Testis (tissue), 5 donors: ENCODE measurements at regions of chr18 and their contacts with region 1.

Region 1: DNA sequence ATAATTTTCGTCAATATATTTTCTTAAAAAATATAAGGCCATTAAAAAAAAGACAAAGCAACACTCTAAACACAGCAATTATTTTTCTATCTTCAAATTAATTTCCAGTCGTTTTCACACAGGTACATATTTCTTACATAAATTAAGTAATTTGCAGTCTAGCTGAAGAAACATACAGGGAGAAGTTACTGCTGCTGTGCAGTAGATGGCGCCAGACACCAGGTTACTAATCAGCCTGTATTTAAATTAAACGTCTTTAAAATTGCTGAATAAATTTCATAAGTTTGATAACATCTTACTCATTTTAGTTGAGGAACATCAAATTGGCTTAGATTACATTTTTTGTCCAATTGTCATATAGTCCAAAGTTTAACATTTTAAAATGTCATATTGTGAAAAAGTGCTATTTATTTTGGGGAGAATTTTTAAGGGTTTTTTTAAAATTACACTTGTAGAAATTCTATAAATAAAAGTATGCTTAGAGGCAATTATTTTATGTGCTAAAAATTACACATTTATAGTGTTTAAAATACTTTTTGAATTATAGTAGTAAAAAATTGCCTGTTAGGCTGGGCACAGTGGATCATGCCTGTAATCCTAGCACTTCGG is 88.4 kb downstream of the PMAIP1 start:
- DNase-seq: peak; percentile 41
- H3K4me3 ChIP-seq: no peak overlapping the region
- H3K27ac ChIP-seq: no peak overlapping the region
- H3K4me1 ChIP-seq: no peaks in the 10 kb centered on the region
- H3K27me3 ChIP-seq: no peaks in the 10 kb centered on the region
- CTCF ChIP-seq: peak; percentile 73 to 90 (median 86)
- POLR2A ChIP-seq: no peak

Region 2: GRCh38 chr18:60554967-60555366 is 566.8 kb after region 1 on chr18:
- intact Hi-C with region 1: loop called (anchors 10 kb)
- DNase-seq: no peak
- H3K4me3 ChIP-seq: no peak overlapping the region
- H3K27ac ChIP-seq: no peak overlapping the region
- H3K4me1 ChIP-seq: no peaks in the 10 kb centered on the region
- H3K27me3 ChIP-seq: no peaks in the 10 kb centered on the region
- CTCF ChIP-seq: no peak
- POLR2A ChIP-seq: no peak